ENCODE measurements at regions of chr16 and their contacts with region 1.

Region 1: GRCh38 chr16:68264128-68265077 is at the start of gene SLC7A6:
- DNase-seq: peak; percentile 75 to 80
- ATAC-seq: peak; percentile 63 to 87 (median 74)
- H3K4me3 ChIP-seq: peak within 1 kb of the TSS; percentile 67 to 98 (median 92)
- H3K27ac ChIP-seq: peak within 1 kb of the TSS; percentile 96 to 99 (median 98)
- H3K4me1 ChIP-seq: peaks cover 4 to 85% (median 46%) of the 10 kb centered on the region in 9 donors
- H3K27me3 ChIP-seq: no peaks in the 10 kb centered on the region
- CTCF ChIP-seq: peak; percentile 57 to 93 (median 83)
- total RNA-seq, gene SLC7A6: 28.4 to 59.2 (median 42.4) TPM

Region 2: DNA sequence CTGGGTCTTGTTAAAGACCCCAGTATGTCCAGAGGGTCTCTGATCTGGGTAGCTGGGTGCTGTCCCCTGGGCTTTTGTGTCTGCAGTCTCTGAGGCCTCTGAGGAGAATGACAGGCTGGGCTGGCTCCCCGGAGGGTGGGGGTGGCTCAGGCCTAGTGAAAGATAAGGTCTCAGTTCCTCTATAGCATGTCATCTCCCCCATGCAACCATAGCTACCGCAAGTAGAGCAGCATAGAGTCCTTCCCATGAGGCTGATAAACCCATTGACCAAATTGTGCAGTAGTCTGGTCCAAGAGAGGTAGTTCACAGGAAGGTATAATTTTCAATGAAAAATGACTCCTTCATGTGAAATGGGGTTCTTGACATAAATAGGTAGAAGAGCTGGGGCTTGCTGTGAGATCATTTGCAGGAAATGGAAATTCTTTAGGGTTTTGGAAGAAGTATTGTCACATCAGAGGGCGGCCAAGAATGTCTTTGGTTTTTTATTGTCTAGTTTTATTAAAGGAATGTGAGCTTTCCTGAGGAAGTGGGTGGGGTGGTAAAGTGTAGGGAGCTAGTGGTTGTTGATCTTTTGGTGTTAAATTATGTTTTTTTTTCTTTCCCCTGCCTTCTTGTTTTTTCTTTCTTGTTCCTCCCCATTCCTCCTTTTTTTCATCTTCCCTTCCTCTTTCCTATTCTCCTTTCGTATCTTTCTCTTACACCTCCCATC is 25.4 kb after region 1 on chr16:
- intact Hi-C with region 1: loop called in 1 of 10 experiments (anchors 2 kb)
- DNase-seq: no peak
- ATAC-seq: peak in 3 of 8 donors; percentile 29 to 43 (median 38)
- H3K4me3 ChIP-seq: no peak overlapping the region
- H3K27ac ChIP-seq: peak overlapping the region; percentile 56 to 88 (median 78)
- H3K4me1 ChIP-seq: peaks cover 35 to 75% (median 67%) of the 10 kb centered on the region in 9 donors
- H3K27me3 ChIP-seq: no peaks in the 10 kb centered on the region
- CTCF ChIP-seq: no peak

Region 3: GRCh38 chr16:68298907-68299561 is 34.6 kb after region 1 on chr16:
- intact Hi-C with region 1: loop called in 2 of 10 experiments (anchors 5 kb)
- DNase-seq: peak; percentile 48 to 64
- ATAC-seq: peak; percentile 37 to 80 (median 63)
- H3K4me3 ChIP-seq: no peak overlapping the region
- H3K27ac ChIP-seq: peak overlapping the region; percentile 23 to 82 (median 70)
- H3K4me1 ChIP-seq: peaks cover 0 to 59% (median 48%) of the 10 kb centered on the region in 9 donors
- H3K27me3 ChIP-seq: no peaks in the 10 kb centered on the region
- CTCF ChIP-seq: no peak

Region 4: DNA sequence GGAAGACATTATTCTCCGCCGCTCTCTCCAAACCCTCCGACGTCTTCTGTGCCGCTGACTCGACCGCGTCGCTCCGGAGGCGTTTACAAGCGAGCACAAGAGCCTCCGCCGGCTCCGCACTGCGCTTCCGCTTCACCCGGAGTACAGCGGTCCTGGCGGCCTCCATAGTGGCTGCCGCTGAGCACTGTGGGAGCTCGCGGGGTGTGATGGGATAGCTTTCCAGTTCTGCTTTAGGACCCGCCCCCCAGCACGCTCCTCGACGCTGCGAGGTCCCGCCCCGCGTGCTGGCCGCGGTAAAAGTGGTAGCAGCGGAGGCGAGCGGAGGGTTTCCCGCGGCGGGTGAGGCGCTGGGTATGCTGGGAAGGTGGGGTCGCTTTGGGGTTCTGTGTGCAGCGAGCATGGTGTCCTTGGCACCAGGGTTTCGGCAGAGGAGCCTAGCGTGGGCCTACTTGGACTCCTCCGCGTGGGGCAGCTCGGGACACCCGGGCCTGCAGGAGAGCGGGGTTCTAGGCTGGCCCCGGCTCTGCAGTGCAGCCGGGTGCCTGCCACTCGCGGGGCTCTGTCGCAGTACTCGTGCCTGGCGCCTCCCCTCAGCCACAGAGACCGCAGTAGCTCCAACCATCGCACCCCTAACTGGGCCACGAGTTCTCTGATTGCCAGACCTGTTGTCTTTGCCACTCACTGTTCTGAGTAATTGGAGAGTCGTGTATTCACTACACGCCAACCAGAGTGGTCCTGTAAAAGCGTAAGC is 46.5 kb after region 1 on chr16 and contains the starts of genes PRMT7 and SLC7A6OS:
- intact Hi-C with region 1: loop called in 7 of 10 experiments (anchors 2 to 5 kb)
- DNase-seq: peak; percentile 88 to 90
- ATAC-seq: peak; percentile 100
- H3K4me3 ChIP-seq: peak within 1 kb of the TSS; percentile 68 to 98 (median 91)
- H3K27ac ChIP-seq: peak within 1 kb of the TSS; percentile 3 to 90 (median 84)
- H3K4me1 ChIP-seq: peaks cover 12 to 45% (median 34%) of the 10 kb centered on the region in 9 donors
- H3K27me3 ChIP-seq: no peaks in the 10 kb centered on the region
- CTCF ChIP-seq: peak in 4 of 9 donors; percentile 31 to 67 (median 56)
- total RNA-seq, gene PRMT7: 22.0 to 39.2 (median 30.7) TPM
- total RNA-seq, gene SLC7A6OS: 9.9 to 14.4 (median 12.8) TPM

Region 5: GRCh38 chr16:68328151-68328859 is 63.9 kb after region 1 on chr16:
- intact Hi-C with region 1: loop called (anchors 1 to 5 kb)
- DNase-seq: peak; percentile 64 to 72
- ATAC-seq: peak; percentile 85 to 95 (median 90)
- H3K4me3 ChIP-seq: no peak overlapping the region
- H3K27ac ChIP-seq: no peak overlapping the region
- H3K4me1 ChIP-seq: peaks cover 0 to 29% (median 18%) of the 10 kb centered on the region in 9 donors
- H3K27me3 ChIP-seq: no peaks in the 10 kb centered on the region
- CTCF ChIP-seq: peak; percentile 80 to 96 (median 93)

Measured in heart right ventricle (tissue), 16 donors.